Right lobe of liver (tissue), 6 donors: ENCODE measurements at regions of chr20 and their contacts with region 1.

Region 1: DNA sequence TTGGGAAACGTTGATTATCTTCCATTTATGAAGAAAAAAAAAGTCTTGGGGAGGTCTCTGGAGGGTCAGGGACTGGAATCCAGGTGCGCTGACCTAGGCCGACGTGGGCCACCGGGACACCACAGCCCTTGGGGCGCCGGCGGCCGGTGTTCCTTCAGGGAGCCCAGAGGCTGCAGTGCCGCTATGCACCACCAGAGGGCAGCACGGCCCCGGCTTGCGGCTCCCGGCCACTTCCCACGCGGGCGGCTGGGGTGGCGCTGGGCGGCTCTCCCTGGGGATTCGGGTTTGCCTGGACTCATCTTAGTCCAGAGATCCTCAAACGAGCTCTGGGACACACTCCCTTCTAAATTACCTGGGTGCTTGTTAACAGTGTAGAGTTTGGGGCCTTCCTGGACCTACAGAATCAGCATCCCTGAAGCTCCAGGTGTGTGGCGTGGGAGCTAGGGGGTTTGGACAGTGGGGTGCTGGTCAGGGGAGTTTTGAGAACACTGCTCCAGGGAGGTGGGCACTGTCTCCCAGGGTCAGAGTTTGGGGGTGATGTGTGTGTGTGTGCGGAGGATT is 23.0 kb upstream of the GTSF1L start:
- DNase-seq: peak; percentile 81 to 85 (median 83)
- ATAC-seq: peak; percentile 93 to 97 (median 94)
- H3K4me3 ChIP-seq: no peak overlapping the region
- H3K27ac ChIP-seq: no peak overlapping the region
- H3K4me1 ChIP-seq: no peaks in the 10 kb centered on the region
- H3K27me3 ChIP-seq: no peaks in the 10 kb centered on the region
- CTCF ChIP-seq: peak; percentile 98 to 100 (median 100)
- POLR2A ChIP-seq: no peak

Region 2: DNA sequence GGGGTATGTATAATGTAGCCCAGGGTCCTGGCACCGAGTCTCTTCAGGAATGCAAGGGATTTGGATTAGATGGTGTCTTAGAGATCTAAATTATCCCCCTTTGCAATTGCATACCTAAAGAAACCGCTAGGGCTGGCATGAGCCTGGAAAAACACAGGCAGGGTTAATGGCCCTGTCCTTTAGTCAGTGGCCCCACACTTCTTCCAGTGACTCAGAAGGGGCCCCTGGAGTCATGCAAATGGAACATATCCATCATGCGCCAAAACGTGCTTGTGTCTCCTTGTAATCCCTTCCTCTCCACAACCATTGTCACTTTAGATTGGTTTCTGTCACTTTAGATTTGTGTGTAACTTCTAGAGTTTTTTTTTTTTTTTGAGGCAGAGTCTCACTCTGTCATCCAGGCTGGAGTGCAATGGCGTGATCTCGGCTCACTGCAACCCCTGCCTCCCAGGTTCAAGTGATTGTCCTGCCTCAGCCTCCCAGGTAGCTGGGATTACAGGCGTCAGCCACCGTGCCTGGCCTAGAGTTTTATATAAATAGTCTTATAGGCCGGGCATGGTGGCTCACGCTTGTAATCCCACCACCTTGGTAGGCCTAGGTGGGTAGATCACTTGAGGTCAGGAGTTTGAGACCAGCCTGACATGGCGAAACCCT is 91.6 kb before region 1 on chr20:
- intact Hi-C with region 1: no loop called
- DNase-seq: no peak
- ATAC-seq: peak in 1 of 4 donors; percentile 6
- H3K4me3 ChIP-seq: peak overlapping the region; percentile 75 to 85 (median 78)
- H3K27ac ChIP-seq: peak overlapping the region in 2 of 3 donors; percentile 75 to 82
- H3K4me1 ChIP-seq: peaks cover 0 to 12% (median 1%) of the 10 kb centered on the region in 4 donors
- H3K27me3 ChIP-seq: no peaks in the 10 kb centered on the region
- CTCF ChIP-seq: no peak
- POLR2A ChIP-seq: no peak

Region 3: GRCh38 chr20:43839793-43840199 is 90.0 kb after region 1 on chr20:
- intact Hi-C with region 1: loop called in 1 of 2 experiments (anchors 10 kb)
- DNase-seq: no peak
- ATAC-seq: no peak
- H3K4me3 ChIP-seq: no peak overlapping the region
- H3K27ac ChIP-seq: no peak overlapping the region
- H3K4me1 ChIP-seq: no peaks in the 10 kb centered on the region
- H3K27me3 ChIP-seq: no peaks in the 10 kb centered on the region
- CTCF ChIP-seq: no peak
- POLR2A ChIP-seq: no peak